AG04450 (cell line): ENCODE measurements at regions of chr7 and their contacts with region 1.

Region 1: DNA sequence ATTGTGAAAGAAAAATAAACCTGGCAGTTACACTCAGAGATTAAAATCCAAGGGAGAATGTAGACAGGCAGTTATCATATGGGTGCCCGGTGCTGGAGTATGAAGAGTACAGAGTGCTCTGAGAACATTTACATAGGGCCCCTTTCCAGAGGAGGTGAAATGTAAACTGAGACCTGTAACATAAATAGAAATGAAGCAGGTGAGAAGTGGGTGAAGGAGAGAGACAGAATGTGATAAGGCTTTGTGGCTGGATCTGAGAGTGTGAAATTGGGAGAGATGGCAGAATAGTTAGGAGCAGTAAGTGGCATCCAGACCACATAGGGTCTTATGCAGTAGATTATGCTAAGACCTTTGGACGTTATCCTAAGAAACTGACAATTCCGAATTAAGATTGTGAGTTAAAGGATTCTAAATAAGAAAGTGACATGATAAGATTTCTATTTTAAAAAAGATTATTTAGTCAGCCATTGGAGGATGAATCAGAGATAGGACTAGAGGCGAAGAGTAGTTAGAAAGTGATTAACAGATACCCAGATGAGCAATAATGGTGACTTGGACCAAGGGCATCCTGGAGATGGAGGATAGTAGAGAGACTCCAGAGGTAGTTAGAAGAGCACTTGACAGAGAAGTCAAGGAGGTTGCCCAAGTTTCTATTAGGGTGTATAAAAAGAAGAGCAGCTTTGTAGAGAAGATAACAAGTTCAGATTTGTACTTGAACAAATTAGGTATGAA is 36.7 kb downstream of the DNAH11 start:
- DNase-seq: no peak
- H3K4me3 ChIP-seq: no peak overlapping the region
- H3K27ac ChIP-seq: no peak overlapping the region
- H3K27me3 ChIP-seq: no peaks in the 10 kb centered on the region
- CTCF ChIP-seq: no peak

Region 2: DNA sequence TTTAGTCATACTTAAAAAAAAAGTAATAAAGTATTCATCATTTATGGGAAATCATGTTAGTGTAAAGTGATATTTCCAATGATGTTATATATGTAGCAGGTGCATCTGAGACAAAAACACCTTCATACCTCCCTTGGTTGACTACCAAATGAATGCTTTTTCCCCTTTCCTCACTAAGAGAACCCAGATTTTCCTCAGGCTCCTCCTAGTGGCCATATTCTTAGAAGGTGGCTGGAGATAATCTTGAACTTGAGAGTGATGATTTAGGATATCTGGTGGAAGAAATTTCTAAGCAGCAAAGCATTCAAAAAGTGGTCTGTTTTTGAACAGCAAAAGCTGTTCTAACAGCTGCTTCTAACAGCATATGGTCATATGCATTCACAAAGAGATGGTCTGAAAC is 53.5 kb before region 1 on chr7:
- CTCF ChIA-PET with region 1: no interaction called
- POLR2A ChIA-PET with region 1: no interaction called
- DNase-seq: no peak
- H3K4me3 ChIP-seq: no peak overlapping the region
- H3K27ac ChIP-seq: no peak overlapping the region
- H3K27me3 ChIP-seq: no peaks in the 10 kb centered on the region
- CTCF ChIP-seq: peak; percentile 61

Region 3: DNA sequence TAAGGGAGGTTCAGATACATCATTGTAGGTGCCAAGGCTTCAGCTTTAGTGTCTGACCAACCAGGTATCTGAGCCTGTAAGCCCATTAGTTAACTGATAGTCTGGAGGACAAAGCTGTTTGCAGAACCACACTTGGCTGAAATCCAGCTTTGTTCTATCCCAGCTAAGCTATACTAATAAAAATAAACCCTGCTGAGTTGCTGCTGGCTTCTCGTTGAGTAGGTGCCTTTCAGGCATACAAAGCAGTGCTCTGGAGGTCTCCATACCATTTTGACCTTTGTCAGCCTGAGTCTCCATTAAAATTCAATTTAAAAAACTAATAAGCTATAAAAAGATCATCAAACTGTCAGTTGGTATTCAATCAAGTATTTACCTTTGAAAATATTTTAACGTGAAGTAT is 344.2 kb after region 1 on chr7:
- CTCF ChIA-PET with region 1: no interaction called
- POLR2A ChIA-PET with region 1: interaction called, 13 read pairs
- DNase-seq: no peak
- H3K4me3 ChIP-seq: no peak overlapping the region
- H3K27ac ChIP-seq: no peak overlapping the region
- H3K27me3 ChIP-seq: no peaks in the 10 kb centered on the region
- CTCF ChIP-seq: no peak